PC-9 (cell line): ENCODE measurements at regions of chrX and their contacts with region 1.

Region 1: GRCh38 chrX:15498741-15499140 is 1.9 kb upstream of the BMX start:
- DNase-seq: no peak
- H3K4me3 ChIP-seq: no peak overlapping the region
- H3K27ac ChIP-seq: no peak overlapping the region
- H3K4me1 ChIP-seq: peaks cover 6% of the 10 kb centered on the region
- H3K27me3 ChIP-seq: no peaks in the 10 kb centered on the region
- CTCF ChIP-seq: no peak

Region 2: DNA sequence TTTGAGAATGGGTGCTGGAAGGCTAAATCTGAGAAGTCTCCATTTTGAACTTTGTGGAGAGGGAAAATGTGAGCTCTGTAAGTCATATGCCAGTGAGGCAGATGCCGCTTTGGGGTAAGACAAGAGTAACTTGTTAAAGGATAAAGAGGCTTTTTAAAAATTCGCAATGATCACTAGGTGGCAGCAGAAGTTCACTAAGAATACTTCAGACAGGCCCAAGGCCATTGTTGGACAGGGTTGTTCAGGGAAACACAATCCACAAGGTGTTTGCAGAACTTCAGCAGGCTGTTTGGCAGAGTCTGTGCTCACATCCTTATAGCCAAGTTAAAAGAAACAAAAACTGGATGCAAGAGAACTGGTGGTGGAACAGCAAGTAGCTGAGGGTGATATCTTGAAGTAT is 149.7 kb before region 1 on chrX:
- CTCF ChIA-PET with region 1: no interaction called
- POLR2A ChIA-PET with region 1: no interaction called
- intact Hi-C with region 1: no loop called
- DNase-seq: peak; percentile 16 to 57
- H3K4me3 ChIP-seq: no peak overlapping the region
- H3K27ac ChIP-seq: no peak overlapping the region
- H3K4me1 ChIP-seq: no peaks in the 10 kb centered on the region
- H3K27me3 ChIP-seq: no peaks in the 10 kb centered on the region
- CTCF ChIP-seq: peak; percentile 72

Region 3: GRCh38 chrX:15616531-15616930 is 117.8 kb after region 1 on chrX:
- CTCF ChIA-PET with region 1: no interaction called
- POLR2A ChIA-PET with region 1: no interaction called
- intact Hi-C with region 1: no loop called
- DNase-seq: no peak
- H3K4me3 ChIP-seq: no peak overlapping the region
- H3K27ac ChIP-seq: no peak overlapping the region
- H3K4me1 ChIP-seq: peaks cover 30% of the 10 kb centered on the region
- H3K27me3 ChIP-seq: no peaks in the 10 kb centered on the region
- CTCF ChIP-seq: no peak

Region 4: GRCh38 chrX:15653961-15654360 is 155.2 kb after region 1 on chrX:
- CTCF ChIA-PET with region 1: no interaction called
- POLR2A ChIA-PET with region 1: interaction called, 38 read pairs
- intact Hi-C with region 1: no loop called
- DNase-seq: no peak
- H3K4me3 ChIP-seq: no peak overlapping the region
- H3K27ac ChIP-seq: no peak overlapping the region
- H3K4me1 ChIP-seq: no peaks in the 10 kb centered on the region
- H3K27me3 ChIP-seq: no peaks in the 10 kb centered on the region
- CTCF ChIP-seq: no peak

Region 5: GRCh38 chrX:15681433-15681832 is 182.7 kb after region 1 on chrX:
- CTCF ChIA-PET with region 1: no interaction called
- POLR2A ChIA-PET with region 1: no interaction called
- intact Hi-C with region 1: no loop called
- DNase-seq: no peak
- H3K4me3 ChIP-seq: no peak overlapping the region
- H3K27ac ChIP-seq: no peak overlapping the region
- H3K4me1 ChIP-seq: peaks cover 12% of the 10 kb centered on the region
- H3K27me3 ChIP-seq: no peaks in the 10 kb centered on the region
- CTCF ChIP-seq: no peak